Posterior vena cava (tissue), 2 donors: ENCODE measurements at regions of chr1 and their contacts with region 1.

Region 1: DNA sequence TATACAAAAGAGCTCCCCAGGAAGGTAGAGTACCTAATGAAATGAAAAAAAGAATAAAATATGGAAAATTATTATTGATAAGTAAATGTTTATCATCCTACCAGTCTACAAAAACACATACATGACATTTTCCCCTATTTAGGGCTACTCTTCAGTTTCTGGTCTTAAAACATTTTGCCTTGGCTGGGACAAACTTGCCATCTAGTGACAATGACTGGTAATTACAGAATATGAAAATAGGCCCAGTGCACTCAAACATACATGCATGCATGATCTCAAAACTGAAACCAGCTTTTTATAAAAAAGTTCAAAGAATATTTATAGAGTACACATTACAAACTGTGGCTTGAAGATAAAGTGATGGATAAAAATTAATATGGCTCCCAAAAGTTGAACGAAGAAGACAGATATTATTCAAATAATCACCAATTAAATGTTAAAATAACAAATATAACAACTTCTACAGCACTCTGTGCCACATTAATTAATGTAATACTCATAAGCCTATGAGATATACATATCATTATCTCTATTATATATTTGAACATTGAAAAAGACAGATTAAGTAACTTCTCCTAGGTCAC is 10.5 kb upstream of the RNPC3 start:
- DNase-seq: no peak

Region 2: GRCh38 chr1:103106426-103107341 is 408.3 kb before region 1 on chr1:
- intact Hi-C with region 1: loop called in 1 of 2 experiments (anchors 5 kb)
- DNase-seq: peak; percentile 51